A673 (cell line): ENCODE measurements at regions of chr7 and their contacts with region 1.

Region 1: DNA sequence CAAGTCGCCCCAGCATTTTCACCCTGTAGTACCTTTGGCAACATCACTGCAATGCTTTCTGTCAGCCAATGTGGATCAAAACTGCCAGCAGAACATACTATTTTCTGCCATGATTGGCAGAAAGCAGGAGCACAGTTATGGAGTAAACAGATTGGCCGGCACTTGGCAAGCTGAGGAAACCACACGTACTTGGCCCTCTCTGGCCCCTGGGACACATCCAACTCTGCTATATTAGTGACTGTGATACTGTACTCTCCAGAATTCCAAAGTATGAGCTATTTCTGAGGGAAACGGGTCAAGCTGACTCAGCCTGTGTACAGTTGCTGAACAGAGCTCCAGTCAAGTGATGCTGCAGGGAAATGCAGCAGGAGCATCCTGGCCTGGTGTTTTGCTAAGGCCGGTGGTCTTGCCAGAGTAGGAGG is 39.8 kb upstream of the LANCL2 start:
- DNase-seq: no peak
- H3K4me3 ChIP-seq: no peak overlapping the region
- H3K27ac ChIP-seq: no peak overlapping the region
- H3K4me1 ChIP-seq: no peaks in the 10 kb centered on the region
- H3K27me3 ChIP-seq: peaks cover 12% of the 10 kb centered on the region
- CTCF ChIP-seq: no peak

Region 2: DNA sequence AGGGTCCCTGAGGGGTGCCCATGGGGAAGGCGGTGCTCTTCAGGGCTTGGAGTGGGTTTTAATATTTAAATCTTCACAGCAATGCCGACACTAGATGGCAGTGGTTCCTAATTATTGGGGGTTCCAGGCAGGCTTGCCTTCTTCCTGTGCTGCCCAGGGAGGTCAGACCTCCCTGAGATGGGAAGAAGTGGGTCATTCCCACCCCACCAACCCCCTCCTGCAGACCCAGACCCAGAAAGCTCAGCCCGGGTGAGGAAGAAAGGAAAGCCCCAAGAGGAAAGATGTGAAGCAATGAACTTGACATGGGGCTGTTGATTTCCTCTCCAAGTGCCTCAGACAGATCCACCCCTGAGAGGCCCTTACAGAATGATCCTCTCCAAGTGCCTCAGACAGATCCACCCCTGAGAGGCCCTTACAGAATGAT is 45.3 kb before region 1 on chr7:
- CTCF ChIA-PET with region 1: no interaction called
- POLR2A ChIA-PET with region 1: no interaction called
- intact Hi-C with region 1: no loop called
- DNase-seq: peak; percentile 78
- H3K4me3 ChIP-seq: no peak overlapping the region
- H3K27ac ChIP-seq: no peak overlapping the region
- H3K4me1 ChIP-seq: no peaks in the 10 kb centered on the region
- H3K27me3 ChIP-seq: peaks cover 4% of the 10 kb centered on the region
- CTCF ChIP-seq: peak; percentile 64

Region 3: DNA sequence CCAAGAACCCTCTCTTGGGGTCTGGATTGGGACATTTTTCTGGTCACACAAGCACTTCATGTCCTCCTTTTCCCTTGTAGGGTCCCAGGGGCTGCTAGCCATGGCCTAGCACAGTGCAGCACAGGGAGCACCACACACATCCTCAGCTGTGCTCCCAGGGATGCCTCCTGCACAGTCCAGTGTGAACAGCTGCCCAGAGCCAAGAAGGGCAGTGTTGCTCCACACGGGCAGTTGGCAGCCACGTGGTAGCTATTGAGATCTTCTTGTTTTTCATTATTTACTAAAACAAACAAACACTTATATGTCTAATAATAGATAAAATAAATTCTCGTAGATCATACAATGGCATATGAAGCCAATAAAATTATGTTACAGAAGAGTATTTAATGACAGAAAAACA is 25.9 kb after region 1 on chr7:
- CTCF ChIA-PET with region 1: no interaction called
- POLR2A ChIA-PET with region 1: interaction called, 12 read pairs
- intact Hi-C with region 1: no loop called
- DNase-seq: no peak
- H3K4me3 ChIP-seq: no peak overlapping the region
- H3K27ac ChIP-seq: no peak overlapping the region
- H3K4me1 ChIP-seq: no peaks in the 10 kb centered on the region
- H3K27me3 ChIP-seq: no peaks in the 10 kb centered on the region
- CTCF ChIP-seq: no peak